Testis (tissue), 5 donors: ENCODE measurements at regions of chr6 and their contacts with region 1.

Region 1: DNA sequence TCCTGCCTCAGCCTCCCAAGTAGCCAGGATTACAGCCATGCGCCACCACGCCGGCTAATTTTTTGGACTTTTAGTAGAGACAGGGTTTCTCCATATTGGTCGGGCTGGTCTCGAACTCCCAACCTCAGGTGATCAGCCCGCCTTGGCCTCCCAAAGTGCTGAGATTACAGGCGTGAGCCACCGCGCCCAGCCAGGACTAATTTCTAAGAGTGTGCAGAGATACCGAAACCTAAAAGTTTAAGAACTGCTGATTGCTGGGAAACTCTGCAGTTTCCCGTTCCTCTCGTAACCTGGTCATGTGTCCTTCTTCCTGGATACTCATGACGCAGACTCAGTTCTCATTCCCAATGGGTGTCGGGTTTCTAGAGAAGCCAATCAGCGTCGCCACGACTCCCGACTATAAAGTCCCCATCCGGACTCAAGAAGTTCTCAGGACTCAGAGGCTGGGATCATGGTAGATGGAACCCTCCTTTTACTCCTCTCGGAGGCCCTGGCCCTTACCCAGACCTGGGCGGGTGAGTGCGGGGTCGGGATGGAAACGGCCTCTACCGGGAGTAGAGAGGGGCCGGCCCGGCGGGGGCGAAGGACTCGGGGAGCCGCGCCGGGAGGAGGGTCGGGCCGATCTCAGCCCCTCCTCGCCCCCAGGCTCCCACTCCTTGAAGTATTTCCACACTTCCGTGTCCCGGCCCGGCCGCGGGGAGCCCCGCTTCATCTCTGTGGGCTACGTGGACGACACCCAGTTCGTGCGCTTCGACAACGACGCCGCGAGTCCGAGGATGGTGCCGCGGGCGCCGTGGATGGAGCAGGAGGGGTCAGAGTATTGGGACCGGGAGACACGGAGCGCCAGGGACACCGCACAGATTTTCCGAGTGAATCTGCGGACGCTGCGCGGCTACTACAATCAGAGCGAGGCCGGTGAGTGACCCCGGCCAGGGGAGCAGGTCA is at the start of gene HLA-E:
- DNase-seq: peak; percentile 98
- H3K4me3 ChIP-seq: peak within 1 kb of the TSS; percentile 77 to 92
- H3K27ac ChIP-seq: peak within 1 kb of the TSS; percentile 95 to 99
- H3K4me1 ChIP-seq: peaks cover 10% of the 10 kb centered on the region
- H3K27me3 ChIP-seq: no peaks in the 10 kb centered on the region
- CTCF ChIP-seq: no peak
- POLR2A ChIP-seq: peak; percentile 64
- total RNA-seq, gene HLA-E: 90.2 to 145 TPM

Region 2: DNA sequence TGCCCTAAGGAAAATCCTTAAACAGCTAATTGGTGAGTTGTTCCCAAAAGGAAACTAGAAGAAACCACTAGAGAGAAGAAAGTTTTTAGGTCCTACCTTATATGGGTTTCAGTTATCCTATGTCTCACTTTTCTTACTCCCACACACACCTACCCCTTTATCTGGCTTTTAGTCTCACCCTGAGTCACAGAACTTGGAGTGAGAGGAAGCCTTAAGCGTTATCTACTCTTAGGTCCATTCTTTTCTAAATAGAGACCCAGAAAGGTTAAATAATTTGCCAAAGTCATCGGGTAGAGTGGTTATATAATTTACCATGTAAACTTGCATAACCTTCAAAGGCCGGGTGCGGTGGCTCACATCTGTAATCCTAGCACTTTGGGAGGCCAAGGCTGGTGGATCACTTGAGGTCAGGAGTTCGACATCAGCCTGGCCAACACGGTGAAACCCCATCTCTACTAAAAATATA is 148.7 kb before region 1 on chr6:
- intact Hi-C with region 1: no loop called
- DNase-seq: no peak
- H3K4me3 ChIP-seq: no peak overlapping the region
- H3K27ac ChIP-seq: no peak overlapping the region
- H3K4me1 ChIP-seq: no peaks in the 10 kb centered on the region
- H3K27me3 ChIP-seq: no peaks in the 10 kb centered on the region
- CTCF ChIP-seq: no peak
- POLR2A ChIP-seq: no peak

Region 3: GRCh38 chr6:30533460-30534294 is 44.3 kb after region 1 on chr6:
- intact Hi-C with region 1: loop called (anchors 5 kb)
- DNase-seq: no peak
- H3K4me3 ChIP-seq: no peak overlapping the region
- H3K27ac ChIP-seq: no peak overlapping the region
- H3K4me1 ChIP-seq: no peaks in the 10 kb centered on the region
- H3K27me3 ChIP-seq: no peaks in the 10 kb centered on the region
- CTCF ChIP-seq: no peak
- POLR2A ChIP-seq: no peak

Region 4: GRCh38 chr6:30600451-30600961 is 111.2 kb after region 1 on chr6:
- intact Hi-C with region 1: loop called (anchors 10 kb)
- DNase-seq: no peak
- H3K4me3 ChIP-seq: no peak overlapping the region
- H3K27ac ChIP-seq: no peak overlapping the region
- H3K4me1 ChIP-seq: no peaks in the 10 kb centered on the region
- H3K27me3 ChIP-seq: no peaks in the 10 kb centered on the region
- CTCF ChIP-seq: no peak
- POLR2A ChIP-seq: no peak

Region 5: GRCh38 chr6:31068669-31069340 is 579.5 kb after region 1 on chr6:
- intact Hi-C with region 1: no loop called
- DNase-seq: peak; percentile 90
- H3K4me3 ChIP-seq: no peak overlapping the region
- H3K27ac ChIP-seq: no peak overlapping the region
- H3K4me1 ChIP-seq: no peaks in the 10 kb centered on the region
- H3K27me3 ChIP-seq: no peaks in the 10 kb centered on the region
- CTCF ChIP-seq: peak; percentile 76 to 95 (median 90)
- POLR2A ChIP-seq: no peak